ENCODE measurements at regions of chr9 and their contacts with region 1.

Region 1: GRCh38 chr9:79571309-79572031 is at the start of gene TLE4:
- DNase-seq: peak; percentile 100
- ATAC-seq: peak; percentile 98 to 99
- H3K4me3 ChIP-seq: peak within 1 kb of the TSS; percentile 98
- H3K27ac ChIP-seq: peak within 1 kb of the TSS; percentile 92
- H3K4me1 ChIP-seq: no peaks in the 10 kb centered on the region
- H3K27me3 ChIP-seq: no peaks in the 10 kb centered on the region
- total RNA-seq, gene TLE4: 16.3 to 20.1 (median 18.7) TPM

Region 2: DNA sequence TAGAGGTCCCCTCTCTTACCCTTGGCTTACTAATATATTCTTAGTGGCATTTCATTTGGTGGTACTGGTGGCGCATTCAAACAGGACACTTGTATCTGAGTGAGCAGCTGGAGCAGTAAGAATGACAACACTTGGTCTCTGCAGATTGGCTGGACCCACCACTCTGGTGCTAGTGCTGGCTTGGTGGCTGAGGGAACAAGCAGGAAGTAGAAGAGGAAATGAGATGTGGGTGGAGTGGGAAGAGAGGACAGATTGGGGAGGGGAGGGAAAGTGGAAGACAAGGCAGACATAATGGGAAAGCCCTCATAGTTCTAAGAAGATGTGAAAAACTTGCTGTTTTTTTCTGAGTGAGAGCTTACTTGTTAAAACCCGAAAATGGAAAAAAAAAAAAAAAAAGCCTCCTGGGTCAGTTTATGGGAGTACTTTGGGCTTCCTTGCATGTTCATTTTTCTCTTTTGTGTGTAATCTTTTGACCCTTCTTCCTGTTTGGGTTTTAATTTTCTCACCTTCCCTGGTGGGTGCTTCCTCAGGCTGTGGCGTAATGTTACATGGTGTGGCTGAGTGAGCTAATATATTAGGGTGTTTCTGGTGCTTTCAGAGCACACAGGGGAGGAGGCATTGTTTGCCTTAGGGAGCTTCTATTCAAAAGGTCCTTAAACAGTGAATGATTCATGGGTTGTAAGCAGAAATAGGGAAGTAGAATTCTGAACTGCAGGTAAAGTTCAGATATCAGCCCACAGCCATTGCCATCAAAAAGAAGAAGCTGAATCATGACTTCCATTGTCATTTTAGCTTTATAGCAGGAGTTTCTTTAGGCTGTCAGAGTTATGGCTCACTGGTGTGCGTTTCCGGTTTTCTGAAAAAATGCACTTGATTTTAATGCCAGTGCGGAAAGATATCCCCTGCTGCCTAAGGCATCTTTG is 52.6 kb after region 1 on chr9:
- intact Hi-C with region 1: loop called in 1 of 4 experiments (anchors 5 kb)
- DNase-seq: peak; percentile 34 to 68 (median 56)
- ATAC-seq: peak; percentile 90 to 97
- H3K4me3 ChIP-seq: no peak overlapping the region
- H3K27ac ChIP-seq: no peak overlapping the region
- H3K4me1 ChIP-seq: peaks cover 2% of the 10 kb centered on the region
- H3K27me3 ChIP-seq: no peaks in the 10 kb centered on the region